ENCODE measurements at regions of chr17 and their contacts with region 1.

Region 1: GRCh38 chr17:979538-980405 is at the start of gene NXN:
- DNase-seq: peak; percentile 98
- total RNA-seq, gene NXN: 14.3 TPM

Region 2: DNA sequence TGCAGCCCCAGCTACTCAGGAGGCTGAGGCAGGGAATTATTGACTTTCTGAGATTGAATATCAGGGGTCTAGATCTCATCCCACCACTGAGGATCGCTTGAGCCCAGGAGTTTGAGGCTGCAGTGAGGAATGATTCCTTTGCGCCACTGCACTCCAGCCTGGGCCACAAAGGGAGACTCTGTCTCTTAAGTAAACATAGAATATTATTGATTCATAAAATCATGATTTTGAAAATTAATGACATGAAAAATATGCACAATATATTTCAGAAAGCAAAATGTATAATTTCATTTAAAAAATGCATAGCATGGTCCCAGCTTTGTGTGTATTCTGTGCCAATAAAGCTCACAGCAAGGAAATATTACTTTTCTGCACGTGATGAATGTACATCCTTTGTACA is 263.5 kb before region 1 on chr17:
- intact Hi-C with region 1: loop called (anchors 10 kb)
- DNase-seq: no peak

Region 3: GRCh38 chr17:794876-795275 is 184.9 kb before region 1 on chr17:
- intact Hi-C with region 1: loop called (anchors 1 kb)
- DNase-seq: peak; percentile 88

Region 4: GRCh38 chr17:879549-880442 is 100.0 kb before region 1 on chr17:
- intact Hi-C with region 1: loop called (anchors 2 kb)
- DNase-seq: peak; percentile 85

Region 5: GRCh38 chr17:915538-916201 is 64.1 kb before region 1 on chr17:
- intact Hi-C with region 1: loop called (anchors 10 kb)
- DNase-seq: no peak

Region 6: GRCh38 chr17:951325-952132 is 28.2 kb before region 1 on chr17:
- intact Hi-C with region 1: no loop called
- DNase-seq: peak; percentile 61

Region 7: GRCh38 chr17:1005361-1005946 is 25.7 kb after region 1 on chr17:
- intact Hi-C with region 1: no loop called
- DNase-seq: no peak

Region 8: GRCh38 chr17:1055751-1056645 is 76.2 kb after region 1 on chr17:
- intact Hi-C with region 1: no loop called
- DNase-seq: no peak